ENCODE measurements at regions of chr11 and their contacts with region 1.

Region 1: GRCh38 chr11:76807206-76807875 is 24.2 kb downstream of the TSKU start:
- DNase-seq: peak; percentile 69
- ATAC-seq: peak; percentile 62
- H3K4me3 ChIP-seq: no peak overlapping the region
- H3K27ac ChIP-seq: no peak overlapping the region
- H3K4me1 ChIP-seq: peaks cover 28% of the 10 kb centered on the region
- H3K27me3 ChIP-seq: no peaks in the 10 kb centered on the region; the same call in 1 of the 2 replicates
- CTCF ChIP-seq: peak; percentile 64
- POLR2A ChIP-seq: no peak
- RAD21 ChIP-seq: peak; percentile 58

Region 2: GRCh38 chr11:76850130-76850529 is 42.8 kb after region 1 on chr11:
- CTCF ChIA-PET with region 1: no interaction called
- POLR2A ChIA-PET with region 1: no interaction called
- dilution Hi-C with region 1: no loop called
- in situ Hi-C with region 1: no loop called
- intact Hi-C with region 1: no loop called
- DNase-seq: no peak
- ATAC-seq: no peak
- H3K4me3 ChIP-seq: no peak overlapping the region
- H3K27ac ChIP-seq: no peak overlapping the region
- H3K4me1 ChIP-seq: no peaks in the 10 kb centered on the region
- H3K27me3 ChIP-seq: peaks cover 39% of the 10 kb centered on the region
- CTCF ChIP-seq: no peak
- POLR2A ChIP-seq: no peak
- RAD21 ChIP-seq: no peak

Region 3: DNA sequence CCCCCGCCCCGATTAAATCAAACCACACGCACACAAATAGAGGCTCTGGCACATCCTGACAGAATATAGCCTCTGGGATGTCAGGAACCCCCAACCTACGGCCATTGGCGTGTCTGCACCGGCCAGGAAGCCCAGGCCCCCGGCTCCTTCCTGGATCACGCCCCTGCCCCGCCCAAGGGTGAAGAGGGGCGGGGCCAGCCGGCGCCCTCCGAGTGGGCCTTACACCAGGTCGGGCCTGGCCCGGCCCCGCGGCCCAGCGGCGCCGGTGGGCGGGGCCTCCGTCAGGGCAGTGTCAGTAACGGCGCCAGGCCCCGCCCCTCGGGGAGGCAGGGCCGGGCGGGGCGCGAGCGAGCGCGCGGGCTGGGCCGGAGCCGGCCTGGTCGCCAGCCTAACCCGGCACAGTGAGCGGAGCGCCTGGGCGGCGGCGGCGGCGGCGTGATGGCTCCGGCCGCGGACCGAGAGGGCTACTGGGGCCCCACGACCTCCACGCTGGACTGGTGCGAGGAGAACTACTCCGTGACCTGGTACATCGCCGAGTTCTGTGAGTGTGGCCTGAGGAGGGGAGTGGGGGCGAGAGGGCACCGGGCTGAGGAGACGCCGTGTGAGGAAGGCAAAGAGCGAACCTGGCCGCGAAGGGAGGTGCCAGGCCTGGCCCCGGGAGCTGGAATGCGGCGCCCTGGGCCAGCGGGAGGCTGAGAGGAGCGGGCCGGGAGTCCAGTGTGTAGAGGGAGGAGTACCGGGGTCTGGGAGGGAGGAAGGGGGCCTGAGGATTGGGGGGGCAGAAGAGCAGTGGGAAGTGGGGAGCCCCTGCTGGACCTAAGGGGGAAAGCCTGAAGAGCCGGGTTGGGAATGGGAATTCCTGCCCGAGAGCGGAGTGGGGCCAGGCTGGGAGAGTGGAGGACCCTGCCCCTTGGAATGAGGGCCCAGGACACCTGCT is 53.5 kb after region 1 on chr11 and contains the start of gene ACER3:
- CTCF ChIA-PET with region 1: interaction called, 7 read pairs
- POLR2A ChIA-PET with region 1: no interaction called
- dilution Hi-C with region 1: no loop called
- in situ Hi-C with region 1: no loop called
- intact Hi-C with region 1: loop called (anchors 5 kb)
- DNase-seq: peak; percentile 78
- ATAC-seq: peak; percentile 100
- H3K4me3 ChIP-seq: peak within 1 kb of the TSS; percentile 94
- H3K27ac ChIP-seq: peak within 1 kb of the TSS; percentile 78
- H3K4me1 ChIP-seq: peaks cover 6% of the 10 kb centered on the region
- H3K27me3 ChIP-seq: no peaks in the 10 kb centered on the region
- CTCF ChIP-seq: peak; percentile 24; the same call in 1 of the 2 replicates
- POLR2A ChIP-seq: peak; percentile 83
- RAD21 ChIP-seq: peak; percentile 9; the same call in 1 of the 2 replicates
- total RNA-seq, gene ACER3: 10.0 and 10.3 TPM in 2 replicates

Region 4: GRCh38 chr11:77039491-77040400 is 232.4 kb after region 1 on chr11:
- CTCF ChIA-PET with region 1: no interaction called
- POLR2A ChIA-PET with region 1: no interaction called
- dilution Hi-C with region 1: no loop called
- in situ Hi-C with region 1: loop called (anchors 10 kb)
- intact Hi-C with region 1: no loop called
- DNase-seq: peak; percentile 33
- ATAC-seq: peak; percentile 66
- H3K4me3 ChIP-seq: peak overlapping the region; percentile 35
- H3K27ac ChIP-seq: no peak overlapping the region
- H3K4me1 ChIP-seq: peaks cover 3% of the 10 kb centered on the region; the same call in 1 of the 2 replicates
- H3K27me3 ChIP-seq: peaks cover 29% of the 10 kb centered on the region
- CTCF ChIP-seq: peak; percentile 50
- POLR2A ChIP-seq: no peak
- RAD21 ChIP-seq: peak; percentile 44

Measured in IMR-90 (cell line).